A549 (cell line): ENCODE measurements at regions of chr2 and their contacts with region 1.

Region 1: DNA sequence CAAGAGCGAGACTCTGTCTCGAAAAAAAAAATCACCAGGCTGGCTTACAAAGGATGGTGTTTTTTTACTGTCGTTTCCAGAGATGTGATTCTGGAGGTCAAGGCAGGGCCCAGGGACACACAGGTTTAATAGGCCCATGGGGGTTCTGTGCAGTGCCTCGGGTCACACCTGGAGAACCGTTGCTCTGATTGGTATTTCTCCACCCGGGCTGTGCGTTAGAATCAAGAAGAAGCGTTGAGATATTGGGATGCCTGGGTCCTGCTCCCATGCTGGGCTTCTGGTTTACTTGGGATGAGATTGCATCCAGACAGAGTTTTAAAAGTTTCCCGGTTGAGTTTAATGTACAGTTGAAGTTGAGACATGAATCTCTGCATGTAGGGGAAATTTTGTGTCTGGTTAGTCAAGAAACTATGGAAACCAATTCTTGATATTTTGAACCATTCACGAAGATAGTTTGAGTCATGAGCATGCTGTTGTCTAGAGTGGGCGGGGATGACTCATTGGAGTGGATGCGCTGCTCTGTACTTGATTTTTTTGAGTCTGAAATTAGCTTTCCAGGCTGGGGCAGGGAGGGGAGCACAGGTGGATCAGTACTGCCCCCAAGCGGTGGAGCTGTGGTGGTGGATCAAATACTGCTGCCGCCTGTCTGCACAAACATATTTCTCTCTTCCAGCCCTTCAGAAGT is 50.1 kb downstream of the GREB1 start:
- DNase-seq: peak; percentile 86 to 88
- ATAC-seq: peak; percentile 54 to 84
- H3K4me3 ChIP-seq: no peak overlapping the region
- H3K27ac ChIP-seq: peak overlapping the region; percentile 21 to 34; a peak in 4 of 6 replicates
- H3K4me1 ChIP-seq: peaks cover 21% of the 10 kb centered on the region
- CTCF ChIP-seq: peak; percentile 96
- EP300 ChIP-seq: no peak
- POLR2A ChIP-seq: no peak
- RAD21 ChIP-seq: peak; percentile 96 to 98

Region 2: GRCh38 chr2:10832203-10832936 is 751.6 kb before region 1 on chr2:
- CTCF ChIA-PET with region 1: interaction called, 56 read pairs
- POLR2A ChIA-PET with region 1: no interaction called
- DNase-seq: peak; percentile 87 to 88
- ATAC-seq: peak; percentile 72 to 91
- H3K4me3 ChIP-seq: no peak overlapping the region
- H3K27ac ChIP-seq: peak overlapping the region in 1 of 2 experiments; percentile 43; a peak in 1 of 6 replicates
- H3K4me1 ChIP-seq: no peaks in the 10 kb centered on the region
- CTCF ChIP-seq: peak; percentile 99
- EP300 ChIP-seq: no peak
- POLR2A ChIP-seq: no peak
- RAD21 ChIP-seq: peak; percentile 99 to 100

Region 3: GRCh38 chr2:11145350-11145749 is 438.6 kb before region 1 on chr2:
- CTCF ChIA-PET with region 1: interaction called, 31 read pairs
- POLR2A ChIA-PET with region 1: no interaction called
- DNase-seq: no peak
- ATAC-seq: 0 out of 6 replicates have a peak, but pooled peaks of 1 of the 2 experiments have one; percentile 14
- H3K4me3 ChIP-seq: no peak overlapping the region
- H3K27ac ChIP-seq: no peak overlapping the region
- H3K4me1 ChIP-seq: 0 out of 3 replicates have a peak, but pooled peaks cover 4% of the 10 kb centered on the region
- CTCF ChIP-seq: no peak
- EP300 ChIP-seq: no peak
- POLR2A ChIP-seq: no peak
- RAD21 ChIP-seq: no peak

Region 4: GRCh38 chr2:11465497-11466406 is 118.2 kb before region 1 on chr2 and contains the start of gene E2F6:
- CTCF ChIA-PET with region 1: interaction called, 92 read pairs
- POLR2A ChIA-PET with region 1: no interaction called
- DNase-seq: peak; percentile 93 to 97
- ATAC-seq: peak; percentile 88 to 90
- H3K4me3 ChIP-seq: peak within 1 kb of the TSS; percentile 59
- H3K27ac ChIP-seq: peak within 1 kb of the TSS; percentile 91 to 98
- H3K4me1 ChIP-seq: peaks cover 36% of the 10 kb centered on the region
- CTCF ChIP-seq: no peak
- EP300 ChIP-seq: no peak
- POLR2A ChIP-seq: peak; percentile 72
- RAD21 ChIP-seq: no peak
- polyA plus RNA-seq, gene E2F6: 38.0 and 41.7 TPM in 2 replicates

Region 5: DNA sequence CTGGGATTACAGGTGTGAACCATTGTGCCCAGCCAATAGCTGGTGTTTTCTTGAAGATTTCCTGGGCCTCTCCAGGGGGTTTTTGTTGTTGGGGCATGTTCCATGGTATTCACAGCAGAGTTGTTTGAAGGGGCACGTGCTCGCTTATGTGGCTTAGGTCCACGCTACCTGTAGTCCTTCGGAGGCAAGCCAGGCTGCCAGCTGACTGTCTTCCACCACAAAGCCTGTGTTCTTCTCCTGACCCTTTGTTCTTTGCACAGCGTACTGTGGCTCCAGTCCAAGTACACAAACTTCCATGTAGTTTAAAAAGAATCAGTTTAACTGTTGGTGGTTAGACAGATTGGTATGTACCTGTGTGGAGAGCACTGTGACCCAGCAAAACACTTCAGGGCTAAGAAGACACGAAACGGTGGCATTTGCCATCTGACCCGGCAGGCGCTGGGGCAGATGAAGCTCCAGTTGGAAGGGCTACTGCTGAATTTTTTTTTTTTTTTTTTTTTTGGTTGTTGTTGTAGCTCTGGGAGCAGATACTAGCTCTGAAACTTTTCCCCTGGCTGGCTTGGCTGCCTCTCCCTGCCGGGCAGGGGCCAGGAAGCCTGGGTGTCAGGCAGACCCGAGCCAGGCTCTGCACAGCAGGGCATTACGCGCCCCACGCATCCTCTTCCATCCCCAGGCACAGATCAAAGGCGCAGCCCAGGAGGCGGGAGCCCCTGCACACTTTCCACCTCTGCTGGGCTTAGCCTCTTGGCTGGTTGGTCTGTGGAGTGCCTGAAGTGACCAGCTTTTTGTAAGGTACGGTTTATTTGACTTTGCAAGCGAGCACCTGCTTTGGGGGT is 44.4 kb before region 1 on chr2:
- CTCF ChIA-PET with region 1: interaction called, 23 read pairs
- POLR2A ChIA-PET with region 1: no interaction called
- DNase-seq: no peak
- ATAC-seq: peak in 1 of 2 experiments; percentile 30; a peak in 3 of 6 replicates
- H3K4me3 ChIP-seq: no peak overlapping the region
- H3K27ac ChIP-seq: no peak overlapping the region; a peak in 1 of 6 replicates
- H3K4me1 ChIP-seq: no peaks in the 10 kb centered on the region
- CTCF ChIP-seq: no peak
- EP300 ChIP-seq: no peak
- POLR2A ChIP-seq: no peak
- RAD21 ChIP-seq: no peak

Region 6: GRCh38 chr2:11610624-11611242 is 26.8 kb after region 1 on chr2:
- CTCF ChIA-PET with region 1: interaction called, 153 read pairs
- POLR2A ChIA-PET with region 1: no interaction called
- DNase-seq: no peak
- ATAC-seq: no peak
- H3K4me3 ChIP-seq: no peak overlapping the region
- H3K27ac ChIP-seq: no peak overlapping the region
- H3K4me1 ChIP-seq: peaks cover 6% of the 10 kb centered on the region; the same call in 2 of the 3 replicates
- CTCF ChIP-seq: no peak
- EP300 ChIP-seq: no peak
- POLR2A ChIP-seq: no peak
- RAD21 ChIP-seq: no peak

Region 7: DNA sequence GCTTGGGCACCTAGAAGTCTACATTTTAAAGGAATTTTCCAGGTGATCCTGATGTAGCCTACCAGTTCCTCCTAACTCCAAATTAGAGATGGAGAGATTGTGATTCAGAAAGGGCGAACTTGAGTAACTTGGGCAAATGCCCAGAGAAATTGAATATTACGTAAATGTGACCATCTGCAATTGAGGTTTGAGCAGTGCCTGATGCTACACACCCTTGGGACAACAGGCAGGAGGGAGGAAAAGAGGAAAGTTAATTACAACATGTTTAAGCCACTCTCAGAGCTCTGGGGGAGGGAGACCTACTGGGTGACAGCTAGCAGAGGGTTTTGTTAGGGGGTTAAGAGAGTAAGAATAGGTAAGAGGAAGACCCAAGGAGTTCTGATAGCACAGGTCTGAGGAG is 371.3 kb after region 1 on chr2:
- CTCF ChIA-PET with region 1: no interaction called
- POLR2A ChIA-PET with region 1: no interaction called
- DNase-seq: no peak
- ATAC-seq: no peak
- H3K4me3 ChIP-seq: no peak overlapping the region
- H3K27ac ChIP-seq: no peak overlapping the region
- H3K4me1 ChIP-seq: no peaks in the 10 kb centered on the region
- CTCF ChIP-seq: no peak
- EP300 ChIP-seq: no peak
- POLR2A ChIP-seq: no peak
- RAD21 ChIP-seq: no peak